Left cardiac atrium (tissue), 4 donors: ENCODE measurements at regions of chr4 and their contacts with region 1.

Region 1: GRCh38 chr4:4248029-4248884 is at the start of gene TMEM128:
- DNase-seq: peak; percentile 94
- ATAC-seq: peak; percentile 98
- total RNA-seq, gene TMEM128: 13.5 to 14.8 TPM

Region 2: GRCh38 chr4:4334798-4335520 is 86.7 kb after region 1 on chr4:
- intact Hi-C with region 1: loop called (anchors 2 to 5 kb)
- DNase-seq: peak; percentile 80
- ATAC-seq: peak; percentile 28 to 36

Region 3: DNA sequence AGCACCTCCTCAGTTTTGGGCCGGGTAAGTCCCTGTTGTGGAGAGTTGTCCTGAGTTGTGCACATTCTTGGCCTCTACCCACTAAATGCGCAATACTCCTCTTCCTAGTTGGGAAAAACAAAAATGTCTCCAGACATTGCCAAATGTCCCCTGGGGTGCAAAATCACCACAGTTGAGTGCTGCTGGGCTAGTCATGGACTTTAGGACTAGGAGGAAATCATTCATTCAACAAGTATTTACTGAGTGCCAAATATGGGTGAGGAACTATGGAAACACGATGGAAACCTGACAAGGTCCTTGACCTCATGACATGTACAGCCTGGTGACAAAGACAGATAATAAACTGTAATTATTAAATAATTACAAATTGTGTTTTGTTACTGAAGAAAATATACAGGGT is 222.0 kb after region 1 on chr4:
- intact Hi-C with region 1: no loop called
- DNase-seq: no peak
- ATAC-seq: peak in 1 of 2 donors; percentile 30

Region 4: GRCh38 chr4:4569028-4569427 is 320.8 kb after region 1 on chr4:
- intact Hi-C with region 1: no loop called
- DNase-seq: no peak
- ATAC-seq: no peak

Region 5: GRCh38 chr4:4775493-4776004 is 527.3 kb after region 1 on chr4:
- intact Hi-C with region 1: no loop called
- DNase-seq: peak; percentile 29
- ATAC-seq: peak; percentile 67 to 86